ENCODE measurements at regions of chr4 and their contacts with region 1.

Region 1: DNA sequence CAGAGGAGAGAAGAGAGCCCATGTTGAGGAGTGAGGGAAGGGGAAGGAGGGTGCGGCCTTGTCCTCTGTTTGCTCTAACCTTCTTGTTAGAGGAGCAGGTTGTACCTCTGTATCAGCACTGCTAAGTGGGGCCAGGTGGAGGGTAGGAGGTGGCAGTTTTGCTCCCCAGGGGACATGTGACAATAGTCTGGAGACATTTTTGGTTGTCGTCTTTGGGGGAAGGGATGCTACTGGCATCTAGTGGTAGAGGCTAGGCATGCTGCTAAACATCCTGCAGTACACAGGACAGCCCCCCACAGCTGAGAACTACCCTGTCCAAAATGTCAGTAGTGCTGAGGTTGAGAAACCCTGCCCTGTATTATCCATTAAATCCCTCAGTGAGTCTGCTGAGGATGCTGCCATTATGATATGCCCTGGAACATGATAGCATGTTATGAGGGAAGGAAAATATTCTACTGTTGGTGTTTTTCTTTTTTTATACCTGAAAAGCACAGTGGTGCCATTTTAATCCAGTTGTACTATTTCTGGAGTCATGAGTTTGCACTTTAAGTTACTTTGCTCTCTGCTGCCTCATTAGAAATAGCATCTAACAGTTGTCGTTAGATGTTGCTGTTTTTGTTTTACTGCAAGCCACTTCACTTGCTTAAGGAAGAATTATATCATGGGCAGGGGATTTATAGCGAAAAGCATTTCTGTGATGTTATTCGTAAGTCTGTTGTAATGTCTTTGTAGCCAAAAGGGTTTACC is 90.6 kb downstream of the LRP2BP start:
- DNase-seq: peak in 24 of 42 donors; percentile 5 to 60 (median 24)

Region 2: GRCh38 chr4:185196437-185196836 is 108.7 kb before region 1 on chr4:
- intact Hi-C with region 1: no loop called
- DNase-seq: no peak

Region 3: GRCh38 chr4:185209031-185209851 is 95.9 kb before region 1 on chr4 and contains the start of gene SNX25:
- intact Hi-C with region 1: loop called (anchors 5 kb)
- DNase-seq: peak; percentile 61 to 96 (median 89)

Region 4: GRCh38 chr4:185379326-185380295 is 74.5 kb after region 1 on chr4:
- intact Hi-C with region 1: no loop called
- DNase-seq: no peak

Measured in head of caudate nucleus (tissue), 42 donors.